ENCODE measurements at regions of chr2 and their contacts with region 1.

Region 1: DNA sequence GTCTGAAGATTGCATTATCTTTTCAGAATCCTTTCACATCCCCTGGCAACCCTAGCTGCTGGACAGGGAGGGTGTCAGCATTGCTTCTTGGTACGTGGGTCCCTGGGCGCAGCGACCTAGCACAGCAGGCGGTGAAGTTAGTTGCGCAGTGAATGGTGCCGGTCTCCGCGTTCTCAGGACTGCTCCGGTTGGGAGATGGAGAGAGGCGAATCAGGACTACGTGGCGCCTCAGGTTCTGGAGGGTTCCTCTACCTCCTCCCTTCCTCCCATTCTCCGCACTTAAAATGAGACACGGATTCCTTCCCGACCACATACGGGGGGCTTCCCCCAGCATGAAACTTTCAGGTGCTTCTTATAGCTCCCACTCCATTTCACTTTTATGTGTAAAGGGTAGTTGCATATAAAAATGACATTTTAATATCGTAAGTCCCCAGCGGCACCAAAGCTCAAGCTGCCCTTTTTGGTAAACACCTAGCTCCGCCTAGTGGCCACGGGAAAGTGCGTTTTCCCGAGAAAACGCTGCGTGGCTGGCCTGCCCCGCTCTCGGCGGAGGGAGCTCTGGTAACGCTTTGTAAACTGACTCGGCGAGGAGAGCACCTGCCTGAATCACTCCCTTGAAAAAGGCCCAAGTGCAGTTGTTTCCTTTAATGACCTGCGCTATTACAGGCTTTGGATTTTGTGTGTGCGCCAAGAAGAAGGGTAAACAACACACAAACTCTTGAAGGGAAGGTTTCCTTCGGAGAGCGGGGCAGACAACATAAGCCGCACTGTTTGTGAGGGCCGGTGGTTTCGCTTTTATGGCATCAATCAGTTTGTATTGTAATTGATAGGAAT is 32.9 kb upstream of the INHBB start:
- DNase-seq: peak; percentile 76
- ATAC-seq: peak; percentile 74
- H3K4me3 ChIP-seq: peak overlapping the region; percentile 16 to 42 (median 35)
- H3K4me3 Mint-ChIP-seq: peak overlapping the region; percentile 86
- H3K27ac ChIP-seq: peak overlapping the region in 1 of 2 donors; percentile 36
- H3K27ac Mint-ChIP-seq: peak overlapping the region; percentile 37
- H3K4me1 ChIP-seq: peaks cover 10 to 14% of the 10 kb centered on the region in 2 donors
- H3K4me1 Mint-ChIP-seq: peaks cover 14% of the 10 kb centered on the region
- H3K27me3 ChIP-seq: peaks cover 0 to 16% (median 1%) of the 10 kb centered on the region in 4 experiments
- H3K27me3 Mint-ChIP-seq: peaks cover 22% of the 10 kb centered on the region
- CTCF ChIP-seq: peak; percentile 83

Region 2: GRCh38 chr2:119641562-119642258 is 671.4 kb before region 1 on chr2:
- CTCF ChIA-PET with region 1: no interaction called
- POLR2A ChIA-PET with region 1: no interaction called
- intact Hi-C with region 1: loop called (anchors 2 kb)
- DNase-seq: peak; percentile 77
- ATAC-seq: peak; percentile 86
- H3K4me3 ChIP-seq: no peak overlapping the region
- H3K4me3 Mint-ChIP-seq: no peak overlapping the region
- H3K27ac ChIP-seq: no peak overlapping the region
- H3K27ac Mint-ChIP-seq: no peak overlapping the region
- H3K4me1 ChIP-seq: peaks cover 0 to 5% of the 10 kb centered on the region in 2 donors
- H3K4me1 Mint-ChIP-seq: peaks cover 6% of the 10 kb centered on the region
- H3K27me3 ChIP-seq: no peaks in the 10 kb centered on the region
- H3K27me3 Mint-ChIP-seq: peaks cover 25% of the 10 kb centered on the region
- CTCF ChIP-seq: peak; percentile 98

Region 3: DNA sequence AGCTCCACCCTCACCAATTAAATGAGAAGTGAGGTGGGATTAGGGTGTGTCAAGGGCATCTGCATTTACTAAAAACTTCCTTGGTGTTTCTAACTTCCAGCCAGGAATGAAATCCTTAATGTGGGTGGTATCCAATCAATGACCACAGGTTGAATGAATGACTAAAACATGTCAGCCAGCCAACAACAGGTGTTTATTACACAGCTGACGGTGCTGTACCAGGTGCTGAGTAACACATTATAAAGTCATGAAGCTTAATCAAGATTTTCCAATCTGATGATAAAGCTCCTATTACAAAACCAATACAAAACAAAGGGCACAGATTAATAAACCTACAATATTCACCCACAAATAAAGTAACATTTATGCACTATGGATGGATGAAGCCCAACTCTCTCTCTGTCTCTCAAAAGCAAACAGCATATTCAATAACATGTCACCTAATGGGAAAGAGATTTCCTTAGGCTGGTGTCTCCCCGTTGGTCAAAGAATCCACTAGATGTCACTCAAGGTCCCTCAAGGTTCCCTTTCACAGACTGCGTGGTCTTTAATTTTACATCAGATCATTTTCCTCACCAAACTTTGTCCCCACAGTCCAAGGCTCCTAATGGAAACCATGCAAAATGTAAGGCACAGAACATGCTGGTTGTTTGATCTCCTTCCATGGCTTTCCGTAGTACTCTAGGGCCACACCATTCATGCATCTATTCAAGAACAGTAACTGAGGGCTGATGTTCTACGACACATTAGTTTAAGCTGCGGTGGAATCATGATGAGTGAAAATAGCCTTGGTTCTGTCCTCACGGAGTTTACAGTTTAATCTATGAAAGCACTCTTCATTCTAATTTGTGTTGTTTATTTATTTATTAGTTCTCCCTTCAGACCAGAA is 559.8 kb before region 1 on chr2:
- CTCF ChIA-PET with region 1: interaction called, 27 read pairs
- POLR2A ChIA-PET with region 1: no interaction called
- intact Hi-C with region 1: no loop called
- DNase-seq: peak; percentile 67
- ATAC-seq: peak; percentile 78
- H3K4me3 ChIP-seq: no peak overlapping the region
- H3K4me3 Mint-ChIP-seq: no peak overlapping the region
- H3K27ac ChIP-seq: no peak overlapping the region
- H3K27ac Mint-ChIP-seq: no peak overlapping the region
- H3K4me1 ChIP-seq: no peaks in the 10 kb centered on the region
- H3K4me1 Mint-ChIP-seq: peaks cover 2% of the 10 kb centered on the region
- H3K27me3 ChIP-seq: no peaks in the 10 kb centered on the region
- H3K27me3 Mint-ChIP-seq: peaks cover 8% of the 10 kb centered on the region
- CTCF ChIP-seq: peak; percentile 73

Region 4: DNA sequence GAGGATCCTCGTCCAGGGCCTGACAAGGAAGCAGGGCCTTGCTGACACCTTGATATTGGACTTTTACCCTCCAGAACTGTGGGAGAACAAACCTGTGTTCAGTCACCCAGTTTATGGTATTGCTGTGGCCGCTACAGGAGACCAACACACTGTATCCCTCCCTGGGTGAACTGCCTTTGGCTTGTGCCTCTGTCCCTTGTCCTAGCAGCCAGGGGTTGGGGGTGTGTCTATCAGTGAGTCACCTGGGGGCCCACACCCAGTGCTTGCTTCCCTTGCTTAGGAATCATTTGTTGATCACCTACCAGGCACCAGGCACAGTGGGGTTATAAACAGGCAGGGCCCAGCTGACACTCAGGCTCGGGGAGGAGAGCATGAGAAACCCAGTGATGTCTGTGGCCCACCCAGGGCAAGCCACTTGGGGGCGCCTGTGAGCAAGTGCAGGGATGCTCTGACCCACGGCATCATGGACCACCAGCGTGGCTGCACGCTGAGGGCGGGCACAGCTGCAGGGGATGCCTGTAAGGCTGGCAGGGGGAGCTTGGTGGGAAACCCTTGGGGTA is 107.0 kb before region 1 on chr2:
- CTCF ChIA-PET with region 1: interaction called, 16 read pairs
- POLR2A ChIA-PET with region 1: no interaction called
- intact Hi-C with region 1: loop called (anchors 1 kb)
- DNase-seq: peak; percentile 26
- ATAC-seq: no peak
- H3K4me3 ChIP-seq: no peak overlapping the region
- H3K4me3 Mint-ChIP-seq: no peak overlapping the region
- H3K27ac ChIP-seq: no peak overlapping the region
- H3K27ac Mint-ChIP-seq: no peak overlapping the region
- H3K4me1 ChIP-seq: peaks cover 4 to 7% of the 10 kb centered on the region in 2 donors
- H3K4me1 Mint-ChIP-seq: peaks cover 5% of the 10 kb centered on the region
- H3K27me3 ChIP-seq: no peaks in the 10 kb centered on the region
- H3K27me3 Mint-ChIP-seq: no peaks in the 10 kb centered on the region
- CTCF ChIP-seq: no peak

Region 5: DNA sequence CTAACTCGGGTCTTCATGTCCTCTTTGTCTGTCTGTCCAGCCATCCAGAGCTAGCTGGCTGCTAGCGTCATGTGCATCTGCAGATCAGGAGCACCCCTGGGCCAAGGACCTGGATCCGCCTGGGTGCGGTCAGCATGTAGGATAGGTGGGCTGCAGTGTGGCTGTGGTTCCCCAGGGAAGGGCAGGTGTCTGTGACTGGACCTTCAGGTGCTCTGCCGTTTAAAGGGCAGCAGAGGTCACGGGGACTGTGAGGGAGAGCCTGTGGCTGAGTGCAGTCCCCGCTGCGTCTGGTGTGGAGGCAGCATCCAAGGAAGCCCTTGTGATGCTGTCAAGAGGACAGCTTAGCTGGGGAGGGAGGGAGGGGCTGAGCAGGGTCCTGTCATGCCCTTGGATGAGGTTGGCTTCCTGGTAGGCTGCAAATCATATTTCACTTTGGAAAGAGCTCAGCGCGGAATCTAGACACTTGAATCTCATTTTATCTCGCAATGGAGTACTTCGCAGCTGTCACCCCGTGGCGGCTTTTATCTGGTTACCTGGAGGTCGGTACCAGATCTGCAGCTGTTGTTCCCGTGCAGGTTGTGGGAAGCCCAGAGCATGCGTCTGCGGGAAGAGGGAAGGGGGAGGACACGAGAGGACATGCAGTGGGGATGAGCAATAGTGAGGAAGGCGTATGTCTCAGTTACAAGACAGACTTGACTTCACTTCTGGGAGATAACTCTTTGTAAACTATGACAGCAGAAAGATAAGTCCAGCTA is 66.4 kb before region 1 on chr2:
- CTCF ChIA-PET with region 1: interaction called, 15 read pairs
- POLR2A ChIA-PET with region 1: no interaction called
- intact Hi-C with region 1: no loop called
- DNase-seq: no peak
- ATAC-seq: no peak
- H3K4me3 ChIP-seq: no peak overlapping the region
- H3K4me3 Mint-ChIP-seq: no peak overlapping the region
- H3K27ac ChIP-seq: no peak overlapping the region
- H3K27ac Mint-ChIP-seq: no peak overlapping the region
- H3K4me1 ChIP-seq: peaks cover 17 to 18% of the 10 kb centered on the region in 2 donors
- H3K4me1 Mint-ChIP-seq: peaks cover 13% of the 10 kb centered on the region
- H3K27me3 ChIP-seq: peaks cover 0 to 9% (median 2%) of the 10 kb centered on the region in 4 experiments
- H3K27me3 Mint-ChIP-seq: peaks cover 14% of the 10 kb centered on the region
- CTCF ChIP-seq: no peak

Region 6: GRCh38 chr2:120257522-120257921 is 55.6 kb before region 1 on chr2:
- CTCF ChIA-PET with region 1: interaction called, 14 read pairs
- POLR2A ChIA-PET with region 1: interaction called, 3 read pairs
- intact Hi-C with region 1: loop called (anchors 2 kb)
- DNase-seq: no peak
- ATAC-seq: no peak
- H3K4me3 ChIP-seq: peak overlapping the region in 1 of 5 experiments; percentile 9
- H3K4me3 Mint-ChIP-seq: no peak overlapping the region
- H3K27ac ChIP-seq: no peak overlapping the region
- H3K27ac Mint-ChIP-seq: no peak overlapping the region
- H3K4me1 ChIP-seq: peaks cover 51 to 67% of the 10 kb centered on the region in 2 donors
- H3K4me1 Mint-ChIP-seq: peaks cover 53% of the 10 kb centered on the region
- H3K27me3 ChIP-seq: no peaks in the 10 kb centered on the region
- H3K27me3 Mint-ChIP-seq: no peaks in the 10 kb centered on the region
- CTCF ChIP-seq: no peak

Region 7: DNA sequence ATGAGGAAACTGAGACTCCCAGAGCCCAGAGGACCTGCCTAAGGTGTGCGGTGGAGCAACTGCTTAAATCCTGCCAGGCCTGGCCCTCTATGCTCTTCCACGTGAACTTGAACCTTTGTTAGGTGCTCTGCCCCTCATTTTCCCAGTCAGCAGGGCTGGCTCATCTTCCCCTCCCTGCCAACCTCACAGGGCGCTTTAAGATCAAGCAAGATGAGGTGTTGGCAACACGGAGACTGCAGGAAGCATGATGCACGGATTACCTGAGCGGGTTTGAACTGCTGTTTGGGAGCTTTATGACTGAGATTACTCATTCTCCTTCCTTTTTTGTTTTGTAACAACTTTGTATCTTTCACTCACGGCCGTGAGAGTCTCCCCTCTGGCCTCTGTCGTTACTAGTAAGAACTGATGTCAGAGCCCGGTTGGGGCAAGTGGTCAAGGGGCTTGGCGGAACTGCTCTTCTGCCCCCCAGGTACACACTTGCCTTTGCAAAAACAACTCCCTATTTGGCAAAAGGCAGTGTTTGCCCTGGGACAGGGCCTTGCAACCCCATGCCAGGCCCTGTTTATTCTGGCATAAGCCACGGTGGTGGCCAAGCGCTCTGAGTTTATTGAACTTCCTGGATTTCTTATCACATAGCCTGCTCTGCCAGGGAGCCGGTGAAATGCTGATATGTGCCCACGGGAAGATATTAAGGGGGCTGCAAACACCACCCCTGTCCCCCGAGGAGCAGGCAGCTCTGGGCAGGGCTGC is 160.6 kb after region 1 on chr2:
- CTCF ChIA-PET with region 1: no interaction called
- POLR2A ChIA-PET with region 1: no interaction called
- intact Hi-C with region 1: no loop called
- DNase-seq: no peak
- ATAC-seq: no peak
- H3K4me3 ChIP-seq: no peak overlapping the region
- H3K4me3 Mint-ChIP-seq: no peak overlapping the region
- H3K27ac ChIP-seq: no peak overlapping the region
- H3K27ac Mint-ChIP-seq: no peak overlapping the region
- H3K4me1 ChIP-seq: no peaks in the 10 kb centered on the region
- H3K4me1 Mint-ChIP-seq: no peaks in the 10 kb centered on the region
- H3K27me3 ChIP-seq: no peaks in the 10 kb centered on the region
- H3K27me3 Mint-ChIP-seq: no peaks in the 10 kb centered on the region
- CTCF ChIP-seq: no peak

Region 8: GRCh38 chr2:122129399-122129798 is 1816.3 kb after region 1 on chr2:
- CTCF ChIA-PET with region 1: no interaction called
- POLR2A ChIA-PET with region 1: no interaction called
- intact Hi-C with region 1: no loop called
- DNase-seq: no peak
- ATAC-seq: no peak
- H3K4me3 ChIP-seq: no peak overlapping the region
- H3K4me3 Mint-ChIP-seq: no peak overlapping the region
- H3K27ac ChIP-seq: no peak overlapping the region
- H3K27ac Mint-ChIP-seq: no peak overlapping the region
- H3K4me1 ChIP-seq: no peaks in the 10 kb centered on the region
- H3K4me1 Mint-ChIP-seq: no peaks in the 10 kb centered on the region
- H3K27me3 ChIP-seq: no peaks in the 10 kb centered on the region
- H3K27me3 Mint-ChIP-seq: no peaks in the 10 kb centered on the region
- CTCF ChIP-seq: no peak